IMR-90 (cell line): ENCODE measurements at regions of chr14 and their contacts with region 1.

Region 1: GRCh38 chr14:63388763-63389431 is 70.2 kb upstream of the GPHB5 start:
- DNase-seq: peak; percentile 58
- ATAC-seq: peak; percentile 95
- H3K4me3 ChIP-seq: no peak overlapping the region
- H3K27ac ChIP-seq: no peak overlapping the region
- H3K4me1 ChIP-seq: no peaks in the 10 kb centered on the region
- H3K27me3 ChIP-seq: no peaks in the 10 kb centered on the region
- CTCF ChIP-seq: peak; percentile 85
- POLR2A ChIP-seq: no peak
- RAD21 ChIP-seq: peak; percentile 89

Region 2: DNA sequence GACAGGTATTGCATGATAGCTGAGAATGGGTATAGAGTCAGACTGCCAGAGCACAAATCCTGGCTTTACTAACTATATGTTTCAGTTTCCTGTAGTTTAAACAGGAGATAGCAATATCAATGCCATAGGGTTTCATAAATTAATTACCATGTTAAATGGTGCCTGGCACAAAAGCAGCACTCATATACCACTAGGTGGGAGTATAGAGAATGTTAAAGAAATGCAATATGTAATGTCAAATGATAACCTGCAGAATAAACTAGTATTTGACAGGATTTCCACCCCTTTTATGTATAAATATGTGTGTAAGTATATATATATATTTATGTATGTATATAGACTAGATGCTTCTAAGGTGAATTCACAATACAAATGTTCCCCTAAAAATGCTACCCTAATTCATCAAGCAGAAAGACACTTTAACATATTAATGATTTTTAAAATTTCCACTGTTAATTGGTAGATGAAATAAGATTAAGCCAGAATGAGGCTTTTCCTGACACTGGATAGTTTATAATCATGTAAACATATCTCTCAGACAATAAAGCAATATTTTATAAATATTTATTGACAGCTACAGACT is 244.1 kb after region 1 on chr14:
- CTCF ChIA-PET with region 1: interaction called, 4 read pairs
- POLR2A ChIA-PET with region 1: no interaction called
- dilution Hi-C with region 1: no loop called
- in situ Hi-C with region 1: no loop called
- intact Hi-C with region 1: loop called (anchors 1 kb)
- DNase-seq: peak; percentile 44
- ATAC-seq: peak; percentile 74
- H3K4me3 ChIP-seq: no peak overlapping the region
- H3K27ac ChIP-seq: no peak overlapping the region
- H3K4me1 ChIP-seq: no peaks in the 10 kb centered on the region
- H3K27me3 ChIP-seq: no peaks in the 10 kb centered on the region
- CTCF ChIP-seq: peak; percentile 70
- POLR2A ChIP-seq: no peak
- RAD21 ChIP-seq: peak; percentile 56

Region 3: DNA sequence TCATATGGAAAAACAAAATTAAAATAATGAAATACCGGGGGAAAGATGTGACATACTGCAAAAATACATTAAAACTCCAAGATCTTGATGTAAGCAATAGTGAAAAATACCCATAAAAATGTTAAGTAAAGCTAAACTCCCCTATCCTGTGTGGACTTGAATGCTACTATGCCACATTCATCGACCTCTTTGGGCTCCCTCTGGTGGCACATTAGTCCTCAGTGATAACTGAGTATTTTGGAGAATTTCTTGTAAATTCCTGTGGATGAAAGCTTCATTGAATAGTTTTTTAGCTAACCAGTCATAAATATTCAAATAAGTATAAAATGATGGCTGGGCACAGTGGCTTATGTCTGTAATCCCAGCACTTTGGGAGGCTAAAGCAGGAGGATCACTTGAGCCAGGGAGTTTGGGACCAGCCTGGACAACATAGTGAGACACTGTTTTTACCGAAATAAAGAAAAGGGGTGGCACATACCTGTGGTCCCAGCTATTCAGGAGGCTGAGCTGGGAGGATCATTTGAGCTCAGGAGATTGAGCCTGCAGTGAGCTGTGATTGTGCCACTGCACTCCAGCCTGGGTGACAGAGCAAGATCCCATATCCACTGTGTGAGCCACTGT is 381.4 kb after region 1 on chr14:
- CTCF ChIA-PET with region 1: interaction called, 4 read pairs
- POLR2A ChIA-PET with region 1: no interaction called
- dilution Hi-C with region 1: no loop called
- in situ Hi-C with region 1: loop called (anchors 25 kb)
- intact Hi-C with region 1: loop called (anchors 2 kb)
- DNase-seq: peak; percentile 62
- ATAC-seq: peak; percentile 94
- H3K4me3 ChIP-seq: no peak overlapping the region
- H3K27ac ChIP-seq: no peak overlapping the region
- H3K4me1 ChIP-seq: peaks cover 3% of the 10 kb centered on the region; the same call in 1 of the 2 replicates
- H3K27me3 ChIP-seq: no peaks in the 10 kb centered on the region; the same call in 1 of the 2 replicates
- CTCF ChIP-seq: peak; percentile 70
- POLR2A ChIP-seq: no peak
- RAD21 ChIP-seq: peak; percentile 66